Right lobe of liver (tissue), 6 donors: ENCODE measurements at regions of chr2 and their contacts with region 1.

Region 1: GRCh38 chr2:189287982-189288521 is 108.5 kb upstream of the COL5A2 start:
- DNase-seq: no peak
- ATAC-seq: peak; percentile 81 to 90 (median 82)
- H3K4me3 ChIP-seq: no peak overlapping the region
- H3K27ac ChIP-seq: no peak overlapping the region
- H3K4me1 ChIP-seq: no peaks in the 10 kb centered on the region
- H3K27me3 ChIP-seq: no peaks in the 10 kb centered on the region
- CTCF ChIP-seq: peak; percentile 55 to 62 (median 60)
- POLR2A ChIP-seq: no peak

Region 2: GRCh38 chr2:189022053-189022481 is 266.0 kb before region 1 on chr2:
- intact Hi-C with region 1: no loop called
- DNase-seq: no peak
- ATAC-seq: no peak
- H3K4me3 ChIP-seq: no peak overlapping the region
- H3K27ac ChIP-seq: no peak overlapping the region
- H3K4me1 ChIP-seq: no peaks in the 10 kb centered on the region
- H3K27me3 ChIP-seq: no peaks in the 10 kb centered on the region
- CTCF ChIP-seq: no peak
- POLR2A ChIP-seq: no peak

Region 3: GRCh38 chr2:189096769-189097447 is 191.1 kb before region 1 on chr2:
- intact Hi-C with region 1: loop called in 1 of 2 experiments (anchors 10 kb)
- DNase-seq: no peak
- ATAC-seq: no peak
- H3K4me3 ChIP-seq: no peak overlapping the region
- H3K27ac ChIP-seq: no peak overlapping the region
- H3K4me1 ChIP-seq: no peaks in the 10 kb centered on the region
- H3K27me3 ChIP-seq: no peaks in the 10 kb centered on the region
- CTCF ChIP-seq: no peak
- POLR2A ChIP-seq: no peak